CD8-positive, alpha-beta T cell (primary cell): ENCODE measurements at regions of chr4 and their contacts with region 1.

Region 1: DNA sequence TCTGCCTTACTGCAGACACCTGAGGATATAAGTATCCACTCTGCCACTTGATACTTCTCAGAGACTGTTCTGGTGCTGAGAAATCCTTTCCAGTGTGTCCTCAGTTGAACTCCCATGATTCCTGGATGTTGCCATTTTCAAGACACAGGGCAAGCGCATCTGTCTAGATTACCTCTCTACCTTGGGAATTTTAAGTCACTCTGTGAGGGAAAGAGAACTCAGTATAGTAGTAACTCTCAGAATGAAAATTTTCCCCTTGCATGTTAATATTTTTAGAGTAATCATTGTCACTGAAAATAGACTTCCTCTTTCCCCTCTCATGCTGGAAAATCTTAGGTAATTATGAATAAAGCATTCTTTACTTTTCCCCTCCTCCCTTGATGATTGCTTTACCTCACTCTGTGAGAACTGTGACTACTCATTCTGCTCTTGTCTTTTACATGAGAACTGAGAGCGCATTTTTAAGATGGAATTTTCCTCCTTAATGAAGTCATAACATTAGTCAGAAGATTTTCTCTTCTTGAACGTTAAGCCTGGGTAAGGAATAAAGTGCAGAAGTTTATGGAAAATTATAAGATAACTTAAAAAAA is 45.0 kb downstream of the TET2 start:
- DNase-seq: no peak
- ATAC-seq: no peak
- H3K4me3 ChIP-seq: no peak overlapping the region
- H3K4me3 Mint-ChIP-seq: no peak overlapping the region
- H3K27ac ChIP-seq: no peak overlapping the region
- H3K27ac Mint-ChIP-seq: no peak overlapping the region
- H3K4me1 ChIP-seq: no peaks in the 10 kb centered on the region
- H3K4me1 Mint-ChIP-seq: peaks cover 45% of the 10 kb centered on the region
- H3K27me3 ChIP-seq: no peaks in the 10 kb centered on the region
- H3K27me3 Mint-ChIP-seq: no peaks in the 10 kb centered on the region
- CTCF ChIP-seq: no peak

Region 2: GRCh38 chr4:104930298-104930697 is 261.4 kb before region 1 on chr4:
- CTCF ChIA-PET with region 1: no interaction called
- POLR2A ChIA-PET with region 1: no interaction called
- intact Hi-C with region 1: loop called in 1 of 2 experiments (anchors 5 kb)
- DNase-seq: peak in 2 of 9 experiments; percentile 3 to 27
- ATAC-seq: no peak
- H3K4me3 ChIP-seq: peak overlapping the region in 1 of 2 experiments; percentile 28
- H3K4me3 Mint-ChIP-seq: no peak overlapping the region
- H3K27ac ChIP-seq: peak overlapping the region in 1 of 2 experiments; percentile 33
- H3K27ac Mint-ChIP-seq: peak overlapping the region; percentile 79
- H3K4me1 ChIP-seq: peaks cover 25% of the 10 kb centered on the region
- H3K4me1 Mint-ChIP-seq: peaks cover 51% of the 10 kb centered on the region
- H3K27me3 ChIP-seq: no peaks in the 10 kb centered on the region
- H3K27me3 Mint-ChIP-seq: no peaks in the 10 kb centered on the region
- CTCF ChIP-seq: no peak

Region 3: DNA sequence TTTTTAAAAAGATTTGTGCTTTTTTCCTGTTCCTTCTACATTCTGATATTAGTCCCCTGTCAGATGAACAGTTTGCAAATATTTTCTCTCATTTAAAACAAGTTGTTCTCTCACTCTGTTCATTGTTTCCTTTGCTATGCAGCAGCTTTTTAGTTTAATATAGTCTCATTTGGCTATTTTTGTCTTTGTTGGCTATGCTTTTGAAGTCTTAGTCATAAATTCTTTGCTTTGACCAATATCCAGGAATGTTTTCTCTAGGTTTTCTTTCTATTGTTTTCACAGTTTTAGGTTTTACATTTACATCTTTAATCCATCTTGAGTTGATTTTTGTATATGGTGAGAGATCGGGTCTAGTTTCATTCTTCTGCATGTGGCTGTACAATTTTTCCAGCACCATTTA is 91.8 kb after region 1 on chr4:
- CTCF ChIA-PET with region 1: no interaction called
- POLR2A ChIA-PET with region 1: no interaction called
- intact Hi-C with region 1: no loop called
- DNase-seq: no peak
- ATAC-seq: no peak
- H3K4me3 ChIP-seq: no peak overlapping the region
- H3K4me3 Mint-ChIP-seq: no peak overlapping the region
- H3K27ac ChIP-seq: no peak overlapping the region
- H3K27ac Mint-ChIP-seq: no peak overlapping the region
- H3K4me1 ChIP-seq: no peaks in the 10 kb centered on the region
- H3K4me1 Mint-ChIP-seq: peaks cover 7% of the 10 kb centered on the region
- H3K27me3 ChIP-seq: no peaks in the 10 kb centered on the region
- H3K27me3 Mint-ChIP-seq: no peaks in the 10 kb centered on the region
- CTCF ChIP-seq: no peak